ENCODE measurements at regions of chr10 and their contacts with region 1.

Region 1: GRCh38 chr10:92873029-92873428 is 24.7 kb downstream of the EXOC6 start:
- DNase-seq: no peak
- H3K4me3 ChIP-seq: no peak overlapping the region
- H3K27ac ChIP-seq: peak overlapping the region in 4 of 8 donors; percentile 15 to 39 (median 34)
- H3K4me1 ChIP-seq: peaks cover 9 to 72% (median 29%) of the 10 kb centered on the region in 6 donors
- H3K27me3 ChIP-seq: no peaks in the 10 kb centered on the region
- CTCF ChIP-seq: no peak
- POLR2A ChIP-seq: no peak

Region 2: DNA sequence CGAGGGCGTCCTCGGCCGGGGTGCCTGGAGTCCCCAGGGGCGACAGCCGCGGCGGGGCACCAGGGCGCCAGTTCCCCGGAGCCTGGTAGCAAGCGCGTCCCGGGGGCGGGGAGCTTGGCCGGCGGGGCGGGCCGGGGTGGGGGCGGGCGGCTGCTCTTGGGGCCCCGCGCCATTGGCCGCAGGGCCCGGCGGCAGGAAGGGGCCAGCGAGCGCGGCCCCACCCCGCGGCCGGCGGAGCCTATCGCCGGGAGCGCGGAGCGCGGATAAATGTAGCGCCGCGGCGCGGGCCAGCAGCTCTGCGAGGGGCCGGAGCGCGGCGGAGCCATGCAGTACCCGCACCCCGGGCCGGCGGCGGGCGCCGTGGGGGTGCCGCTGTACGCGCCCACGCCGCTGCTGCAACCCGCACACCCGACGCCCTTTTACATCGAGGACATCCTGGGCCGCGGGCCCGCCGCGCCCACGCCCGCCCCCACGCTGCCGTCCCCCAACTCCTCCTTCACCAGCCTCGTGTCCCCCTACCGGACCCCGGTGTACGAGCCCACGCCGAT is 183.3 kb before region 1 on chr10 and contains the start of gene HHEX:
- intact Hi-C with region 1: loop called (anchors 10 kb)
- DNase-seq: peak; percentile 98
- H3K4me3 ChIP-seq: peak within 1 kb of the TSS; percentile 57 to 83 (median 71)
- H3K27ac ChIP-seq: peak within 1 kb of the TSS; percentile 82 to 99 (median 98)
- H3K4me1 ChIP-seq: peaks cover 4 to 76% (median 55%) of the 10 kb centered on the region in 6 donors
- H3K27me3 ChIP-seq: peaks cover 0 to 51% (median 0%) of the 10 kb centered on the region in 7 donors
- CTCF ChIP-seq: peak in 2 of 11 experiments; percentile 10 to 12
- POLR2A ChIP-seq: peak in 2 of 3 donors; percentile 61 to 93
- total RNA-seq, gene HHEX: 45.9 to 74.3 (median 51.9) TPM

Region 3: GRCh38 chr10:92822060-92822634 is 50.9 kb before region 1 on chr10:
- intact Hi-C with region 1: loop called (anchors 10 kb)
- DNase-seq: no peak
- H3K4me3 ChIP-seq: no peak overlapping the region
- H3K27ac ChIP-seq: peak overlapping the region in 7 of 8 donors; percentile 44 to 75 (median 65)
- H3K4me1 ChIP-seq: peaks cover 0 to 32% (median 13%) of the 10 kb centered on the region in 6 donors
- H3K27me3 ChIP-seq: no peaks in the 10 kb centered on the region
- CTCF ChIP-seq: no peak
- POLR2A ChIP-seq: no peak

Region 4: DNA sequence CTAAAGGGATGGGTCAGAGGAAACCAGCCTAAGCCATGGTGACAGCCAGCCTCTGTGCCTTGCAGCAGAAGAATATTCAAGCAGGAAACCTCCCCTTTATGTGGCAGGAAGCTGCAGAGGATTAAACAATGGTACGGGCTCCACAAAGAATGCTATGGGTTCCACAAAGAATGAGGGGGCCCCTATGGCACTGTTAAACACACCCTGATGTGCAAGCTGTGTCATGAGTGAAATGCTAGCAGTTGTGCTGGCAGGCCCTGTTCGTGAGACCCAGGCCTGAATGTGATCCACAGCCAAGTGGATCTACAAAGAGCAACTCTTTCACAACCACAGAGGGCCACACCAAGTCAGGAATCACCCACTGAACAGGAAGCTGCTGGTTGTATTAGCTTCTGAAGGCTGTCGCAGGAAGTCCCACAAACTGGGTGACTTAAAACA is 540.2 kb after region 1 on chr10:
- intact Hi-C with region 1: no loop called
- DNase-seq: no peak
- H3K4me3 ChIP-seq: peak overlapping the region in 1 of 8 donors; percentile 17
- H3K27ac ChIP-seq: peak overlapping the region in 7 of 8 donors; percentile 32 to 76 (median 68)
- H3K4me1 ChIP-seq: peaks cover 15 to 27% (median 21%) of the 10 kb centered on the region in 6 donors
- H3K27me3 ChIP-seq: no peaks in the 10 kb centered on the region
- CTCF ChIP-seq: no peak
- POLR2A ChIP-seq: no peak